HEK293T (cell line): ENCODE measurements at regions of chr7 and their contacts with region 1.

Region 1: GRCh38 chr7:130273081-130273932 is 6.6 kb downstream of the CPA2 start:
- DNase-seq: peak; percentile 78

Region 2: GRCh38 chr7:130263130-130263529 is 10.2 kb before region 1 on chr7:
- CTCF ChIA-PET with region 1: interaction called, 3 read pairs
- POLR2A ChIA-PET with region 1: interaction called, 12 read pairs
- DNase-seq: no peak

Region 3: GRCh38 chr7:130334274-130334673 is 61.0 kb after region 1 on chr7:
- CTCF ChIA-PET with region 1: interaction called, 10 read pairs
- POLR2A ChIA-PET with region 1: no interaction called
- DNase-seq: no peak

Region 4: GRCh38 chr7:130752424-130752823 is 479.1 kb after region 1 on chr7:
- CTCF ChIA-PET with region 1: no interaction called
- POLR2A ChIA-PET with region 1: no interaction called
- DNase-seq: no peak